ENCODE measurements at regions of chr6 and their contacts with region 1.

Region 1: GRCh38 chr6:10429638-10430427 is 15.0 kb upstream of the TFAP2A start:
- DNase-seq: peak; percentile 40 to 57
- H3K4me3 ChIP-seq: no peak overlapping the region
- H3K27ac ChIP-seq: no peak overlapping the region
- H3K4me1 ChIP-seq: peaks cover 13% of the 10 kb centered on the region
- H3K27me3 ChIP-seq: no peaks in the 10 kb centered on the region
- CTCF ChIP-seq: peak; percentile 66

Region 2: DNA sequence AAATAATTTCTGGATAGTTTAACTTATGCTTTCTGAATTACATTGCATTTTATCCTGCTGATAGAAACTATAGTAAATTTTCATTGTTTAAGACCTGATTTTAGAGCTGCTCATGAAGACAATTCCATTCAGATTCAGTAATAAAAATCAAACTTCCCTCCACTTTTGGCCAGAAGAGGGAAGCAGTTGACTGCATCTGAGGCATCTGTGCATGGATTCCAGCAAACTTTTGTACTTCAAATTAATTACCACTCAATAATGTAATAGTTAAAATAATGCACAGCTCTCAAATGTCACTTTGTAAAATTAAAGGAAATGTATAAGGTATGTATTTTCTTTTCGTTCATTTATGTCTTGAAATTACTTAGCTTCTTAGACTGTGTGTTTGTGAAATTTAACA is 1930.3 kb before region 1 on chr6:
- CTCF ChIA-PET with region 1: interaction called, 3 read pairs
- POLR2A ChIA-PET with region 1: no interaction called
- intact Hi-C with region 1: loop called (anchors 2 kb)
- DNase-seq: peak in 1 of 2 experiments; percentile 8
- H3K4me3 ChIP-seq: no peak overlapping the region
- H3K27ac ChIP-seq: no peak overlapping the region
- H3K4me1 ChIP-seq: no peaks in the 10 kb centered on the region
- H3K27me3 ChIP-seq: no peaks in the 10 kb centered on the region
- CTCF ChIP-seq: peak; percentile 62

Region 3: GRCh38 chr6:8707956-8708772 is 1721.7 kb before region 1 on chr6:
- CTCF ChIA-PET with region 1: interaction called, 3 read pairs
- POLR2A ChIA-PET with region 1: no interaction called
- intact Hi-C with region 1: loop called (anchors 1 kb)
- DNase-seq: peak in 1 of 2 experiments; percentile 56
- H3K4me3 ChIP-seq: no peak overlapping the region
- H3K27ac ChIP-seq: no peak overlapping the region
- H3K4me1 ChIP-seq: no peaks in the 10 kb centered on the region
- H3K27me3 ChIP-seq: no peaks in the 10 kb centered on the region
- CTCF ChIP-seq: no peak; the same call in 1 of the 2 replicates

Region 4: GRCh38 chr6:9250852-9251251 is 1179.0 kb before region 1 on chr6:
- CTCF ChIA-PET with region 1: interaction called, 4 read pairs
- POLR2A ChIA-PET with region 1: no interaction called
- intact Hi-C with region 1: loop called (anchors 1 kb)
- DNase-seq: peak; percentile 43 to 67
- H3K4me3 ChIP-seq: no peak overlapping the region
- H3K27ac ChIP-seq: no peak overlapping the region
- H3K4me1 ChIP-seq: no peaks in the 10 kb centered on the region
- H3K27me3 ChIP-seq: no peaks in the 10 kb centered on the region
- CTCF ChIP-seq: peak; percentile 61

Region 5: GRCh38 chr6:10230559-10230958 is 199.3 kb before region 1 on chr6:
- CTCF ChIA-PET with region 1: no interaction called
- POLR2A ChIA-PET with region 1: interaction called, 11 read pairs
- intact Hi-C with region 1: no loop called
- DNase-seq: peak in 1 of 2 experiments; percentile 71
- H3K4me3 ChIP-seq: no peak overlapping the region
- H3K27ac ChIP-seq: no peak overlapping the region
- H3K4me1 ChIP-seq: no peaks in the 10 kb centered on the region
- H3K27me3 ChIP-seq: no peaks in the 10 kb centered on the region
- CTCF ChIP-seq: no peak

Region 6: DNA sequence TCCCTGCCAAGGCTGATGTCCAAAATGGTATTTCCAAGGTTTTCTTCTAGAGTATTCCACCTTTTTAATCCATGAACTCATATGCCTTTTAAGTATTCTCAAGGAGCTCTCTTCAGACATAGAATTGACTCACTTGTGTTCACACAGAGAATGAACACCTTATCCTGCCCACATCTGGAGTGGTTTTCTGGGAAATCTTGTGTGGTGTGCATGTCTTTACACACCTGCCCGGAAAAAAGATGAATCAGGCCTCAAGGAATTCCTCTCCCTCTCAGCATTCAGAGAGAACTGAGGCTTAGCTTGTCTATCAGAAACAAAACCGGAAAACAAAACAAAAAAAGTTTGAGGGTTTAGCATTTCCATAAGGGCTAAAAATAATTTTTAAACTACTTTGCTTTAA is 163.8 kb before region 1 on chr6:
- CTCF ChIA-PET with region 1: no interaction called
- POLR2A ChIA-PET with region 1: no interaction called
- intact Hi-C with region 1: no loop called
- DNase-seq: no peak
- H3K4me3 ChIP-seq: no peak overlapping the region
- H3K27ac ChIP-seq: no peak overlapping the region
- H3K4me1 ChIP-seq: no peaks in the 10 kb centered on the region
- H3K27me3 ChIP-seq: no peaks in the 10 kb centered on the region
- CTCF ChIP-seq: no peak

Region 7: GRCh38 chr6:10363911-10364310 is 65.9 kb before region 1 on chr6:
- CTCF ChIA-PET with region 1: no interaction called
- POLR2A ChIA-PET with region 1: no interaction called
- intact Hi-C with region 1: no loop called
- DNase-seq: no peak
- H3K4me3 ChIP-seq: no peak overlapping the region
- H3K27ac ChIP-seq: no peak overlapping the region
- H3K4me1 ChIP-seq: no peaks in the 10 kb centered on the region
- H3K27me3 ChIP-seq: no peaks in the 10 kb centered on the region
- CTCF ChIP-seq: no peak

Region 8: GRCh38 chr6:10465629-10466504 is 36.0 kb after region 1 on chr6:
- CTCF ChIA-PET with region 1: interaction called, 5 read pairs
- POLR2A ChIA-PET with region 1: no interaction called
- intact Hi-C with region 1: loop called (anchors 1 kb)
- DNase-seq: peak in 1 of 2 experiments; percentile 62
- H3K4me3 ChIP-seq: no peak overlapping the region
- H3K27ac ChIP-seq: no peak overlapping the region
- H3K4me1 ChIP-seq: peaks cover 19% of the 10 kb centered on the region
- H3K27me3 ChIP-seq: no peaks in the 10 kb centered on the region
- CTCF ChIP-seq: peak; percentile 61

Region 9: DNA sequence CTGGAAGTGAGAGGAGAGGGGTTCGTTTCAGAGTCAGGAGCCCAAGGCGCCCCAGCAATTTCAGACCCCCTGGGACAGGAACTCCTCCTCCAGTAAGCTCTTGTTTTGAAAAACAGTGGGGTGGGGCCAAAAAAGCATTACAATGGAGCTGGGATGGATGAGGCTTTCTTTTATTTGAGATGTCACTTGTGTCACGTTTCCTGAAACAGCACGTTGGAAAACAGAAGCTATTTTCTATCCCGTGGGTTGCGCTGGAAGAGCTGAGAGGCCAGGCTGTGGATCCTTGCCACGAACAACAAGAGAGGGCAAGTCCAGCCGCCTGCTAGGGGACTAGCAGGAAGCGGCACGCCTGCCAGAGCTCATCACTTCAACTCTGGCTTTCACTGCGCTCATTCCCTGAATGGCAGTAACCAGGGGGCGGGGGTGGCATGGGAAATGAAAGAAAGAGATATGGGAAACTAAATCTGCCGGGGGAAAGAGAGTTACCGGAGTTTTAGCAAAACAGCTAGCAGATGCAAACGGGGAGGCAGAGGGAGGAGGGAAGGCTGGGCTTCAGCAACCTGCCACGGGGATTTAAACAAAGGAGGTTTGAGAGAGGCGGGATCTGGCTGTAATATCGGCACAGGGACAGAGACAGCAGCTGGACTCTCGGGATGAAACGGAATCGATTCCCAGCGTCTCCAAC is 125.9 kb after region 1 on chr6:
- CTCF ChIA-PET with region 1: no interaction called
- POLR2A ChIA-PET with region 1: no interaction called
- intact Hi-C with region 1: no loop called
- DNase-seq: no peak
- H3K4me3 ChIP-seq: no peak overlapping the region
- H3K27ac ChIP-seq: no peak overlapping the region
- H3K4me1 ChIP-seq: no peaks in the 10 kb centered on the region
- H3K27me3 ChIP-seq: no peaks in the 10 kb centered on the region
- CTCF ChIP-seq: no peak